ENCODE measurements at regions of chr5 and their contacts with region 1.

Region 1: DNA sequence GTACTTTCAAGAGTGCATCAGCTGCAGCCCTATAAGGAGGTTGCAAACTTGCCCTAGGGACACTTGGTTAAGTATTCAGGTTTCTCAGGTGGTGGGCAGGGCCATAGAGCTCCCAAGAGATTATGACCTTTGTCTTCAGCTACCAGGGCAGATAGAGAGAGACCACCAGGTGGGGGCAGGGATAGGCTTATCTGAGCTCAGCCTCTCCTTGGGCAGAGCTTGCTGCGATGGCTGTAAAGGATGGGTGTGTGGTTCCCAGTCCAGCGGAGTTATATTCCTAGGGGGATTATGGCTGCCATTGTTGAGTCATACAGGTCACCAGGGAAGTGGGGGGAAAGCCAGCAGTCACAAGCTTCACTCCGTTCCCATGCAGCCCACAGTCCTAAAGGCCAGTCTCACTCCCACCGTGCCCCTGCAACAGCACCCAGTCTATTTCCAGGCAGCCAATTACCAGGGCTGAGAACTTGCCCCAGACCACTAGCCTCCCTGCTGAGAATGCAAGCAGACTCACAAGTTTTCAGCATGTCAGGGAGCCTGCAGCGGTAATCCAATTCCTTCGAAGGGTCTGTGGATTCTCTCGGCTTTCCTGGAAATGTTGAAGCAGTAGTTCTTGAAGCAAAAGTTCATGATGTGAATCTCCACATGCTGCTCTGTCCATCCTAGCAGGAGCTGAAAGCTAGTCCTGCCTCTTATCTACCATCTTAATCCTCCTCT is 151.5 kb downstream of the SLC12A2 start:
- DNase-seq: no peak
- H3K4me3 ChIP-seq: no peak overlapping the region
- H3K27ac ChIP-seq: no peak overlapping the region
- H3K4me1 ChIP-seq: no peaks in the 10 kb centered on the region
- H3K27me3 ChIP-seq: no peaks in the 10 kb centered on the region
- CTCF ChIP-seq: no peak
- POLR2A ChIP-seq: no peak

Region 2: GRCh38 chr5:127849891-127850290 is 385.2 kb before region 1 on chr5:
- intact Hi-C with region 1: loop called (anchors 5 kb)
- DNase-seq: no peak
- H3K4me3 ChIP-seq: no peak overlapping the region
- H3K27ac ChIP-seq: peak overlapping the region in 1 of 2 donors; percentile 38
- H3K4me1 ChIP-seq: no peaks in the 10 kb centered on the region
- H3K27me3 ChIP-seq: no peaks in the 10 kb centered on the region
- CTCF ChIP-seq: no peak
- POLR2A ChIP-seq: no peak

Region 3: GRCh38 chr5:128154943-128155342 is 80.1 kb before region 1 on chr5:
- intact Hi-C with region 1: no loop called
- DNase-seq: no peak
- H3K4me3 ChIP-seq: no peak overlapping the region
- H3K27ac ChIP-seq: no peak overlapping the region
- H3K4me1 ChIP-seq: no peaks in the 10 kb centered on the region
- H3K27me3 ChIP-seq: no peaks in the 10 kb centered on the region
- CTCF ChIP-seq: no peak
- POLR2A ChIP-seq: no peak

Region 4: GRCh38 chr5:128252756-128253155 is 17.7 kb after region 1 on chr5:
- intact Hi-C with region 1: no loop called
- DNase-seq: no peak
- H3K4me3 ChIP-seq: no peak overlapping the region
- H3K27ac ChIP-seq: no peak overlapping the region
- H3K4me1 ChIP-seq: no peaks in the 10 kb centered on the region
- H3K27me3 ChIP-seq: no peaks in the 10 kb centered on the region
- CTCF ChIP-seq: no peak
- POLR2A ChIP-seq: no peak